ENCODE measurements at regions of chr1 and their contacts with region 1.

Region 1: DNA sequence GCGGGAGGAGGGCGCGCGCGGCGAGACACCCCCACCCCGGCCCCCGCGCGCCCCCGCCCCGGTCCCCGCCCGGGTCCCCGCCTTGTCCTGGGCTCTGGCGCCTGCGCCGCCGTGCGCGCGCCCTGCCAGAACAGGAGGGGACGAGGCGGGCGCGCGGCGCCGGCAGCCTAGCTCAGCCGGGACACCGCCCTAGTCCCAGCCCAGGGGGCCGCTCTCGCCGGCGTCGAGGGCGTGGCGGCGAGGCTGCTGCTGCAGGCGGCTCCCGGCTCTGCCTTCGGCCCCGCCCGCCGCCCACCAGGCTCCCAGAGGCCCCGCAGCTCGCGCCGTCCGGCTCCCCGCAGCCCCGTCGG is at the start of gene RCAN3:
- DNase-seq: peak; percentile 81
- H3K4me3 Mint-ChIP-seq: peak within 1 kb of the TSS; percentile 76
- H3K27ac Mint-ChIP-seq: peak within 1 kb of the TSS; percentile 59
- H3K4me1 Mint-ChIP-seq: peaks cover 16% of the 10 kb centered on the region
- H3K27me3 Mint-ChIP-seq: no peaks in the 10 kb centered on the region
- CTCF ChIP-seq: no peak
- total RNA-seq, gene RCAN3: 6.1 and 7.1 TPM in 2 replicates

Region 2: GRCh38 chr1:24475700-24476099 is 27.0 kb before region 1 on chr1:
- CTCF ChIA-PET with region 1: interaction called, 3 read pairs
- POLR2A ChIA-PET with region 1: interaction called, 11 read pairs
- intact Hi-C with region 1: no loop called
- DNase-seq: no peak
- H3K4me3 Mint-ChIP-seq: no peak overlapping the region
- H3K27ac Mint-ChIP-seq: no peak overlapping the region
- H3K4me1 Mint-ChIP-seq: no peaks in the 10 kb centered on the region
- H3K27me3 Mint-ChIP-seq: no peaks in the 10 kb centered on the region
- CTCF ChIP-seq: no peak

Region 3: GRCh38 chr1:24513706-24514105 is 11.0 kb after region 1 on chr1:
- CTCF ChIA-PET with region 1: interaction called, 4 read pairs
- POLR2A ChIA-PET with region 1: interaction called, 70 read pairs
- intact Hi-C with region 1: no loop called
- DNase-seq: no peak
- H3K4me3 Mint-ChIP-seq: no peak overlapping the region
- H3K27ac Mint-ChIP-seq: no peak overlapping the region
- H3K4me1 Mint-ChIP-seq: peaks cover 15% of the 10 kb centered on the region
- H3K27me3 Mint-ChIP-seq: no peaks in the 10 kb centered on the region
- CTCF ChIP-seq: no peak

Region 4: GRCh38 chr1:24541711-24542346 is 39.1 kb after region 1 on chr1:
- CTCF ChIA-PET with region 1: interaction called, 3 read pairs
- POLR2A ChIA-PET with region 1: interaction called, 10 read pairs
- intact Hi-C with region 1: no loop called
- DNase-seq: peak; percentile 24
- H3K4me3 Mint-ChIP-seq: no peak overlapping the region
- H3K27ac Mint-ChIP-seq: peak overlapping the region; percentile 39
- H3K4me1 Mint-ChIP-seq: peaks cover 8% of the 10 kb centered on the region
- H3K27me3 Mint-ChIP-seq: no peaks in the 10 kb centered on the region
- CTCF ChIP-seq: peak; percentile 44

Measured in MCF 10A (cell line).